Mammary epithelial cell (primary cell): ENCODE measurements at regions of chr17 and their contacts with region 1.

Region 1: GRCh38 chr17:20022701-20023100 is 13.5 kb downstream of the SPECC1 start:
- DNase-seq: no peak
- H3K4me3 ChIP-seq: no peak overlapping the region
- H3K27ac ChIP-seq: no peak overlapping the region
- H3K4me1 ChIP-seq: no peaks in the 10 kb centered on the region
- H3K27me3 ChIP-seq: peaks cover 3% of the 10 kb centered on the region
- CTCF ChIP-seq: no peak

Region 2: GRCh38 chr17:20063665-20064648 is 41.3 kb after region 1 on chr17:
- CTCF ChIA-PET with region 1: no interaction called
- dilution Hi-C with region 1: no loop called
- in situ Hi-C with region 1: no loop called
- intact Hi-C with region 1: loop called (anchors 5 kb)
- DNase-seq: peak; percentile 90
- H3K4me3 ChIP-seq: peak overlapping the region in 2 of 3 experiments; percentile 4 to 5
- H3K27ac ChIP-seq: peak overlapping the region; percentile 74
- H3K4me1 ChIP-seq: peaks cover 46% of the 10 kb centered on the region
- H3K27me3 ChIP-seq: no peaks in the 10 kb centered on the region
- CTCF ChIP-seq: no peak